Mammary epithelial cell (primary cell): ENCODE measurements at regions of chr1 and their contacts with region 1.

Region 1: GRCh38 chr1:47527658-47528255 is 89.9 kb downstream of the FOXD2 start:
- DNase-seq: peak; percentile 36
- H3K4me3 ChIP-seq: no peak overlapping the region
- H3K27ac ChIP-seq: no peak overlapping the region
- H3K4me1 ChIP-seq: no peaks in the 10 kb centered on the region
- H3K27me3 ChIP-seq: peaks cover 6% of the 10 kb centered on the region
- CTCF ChIP-seq: peak; percentile 76 to 85

Region 2: DNA sequence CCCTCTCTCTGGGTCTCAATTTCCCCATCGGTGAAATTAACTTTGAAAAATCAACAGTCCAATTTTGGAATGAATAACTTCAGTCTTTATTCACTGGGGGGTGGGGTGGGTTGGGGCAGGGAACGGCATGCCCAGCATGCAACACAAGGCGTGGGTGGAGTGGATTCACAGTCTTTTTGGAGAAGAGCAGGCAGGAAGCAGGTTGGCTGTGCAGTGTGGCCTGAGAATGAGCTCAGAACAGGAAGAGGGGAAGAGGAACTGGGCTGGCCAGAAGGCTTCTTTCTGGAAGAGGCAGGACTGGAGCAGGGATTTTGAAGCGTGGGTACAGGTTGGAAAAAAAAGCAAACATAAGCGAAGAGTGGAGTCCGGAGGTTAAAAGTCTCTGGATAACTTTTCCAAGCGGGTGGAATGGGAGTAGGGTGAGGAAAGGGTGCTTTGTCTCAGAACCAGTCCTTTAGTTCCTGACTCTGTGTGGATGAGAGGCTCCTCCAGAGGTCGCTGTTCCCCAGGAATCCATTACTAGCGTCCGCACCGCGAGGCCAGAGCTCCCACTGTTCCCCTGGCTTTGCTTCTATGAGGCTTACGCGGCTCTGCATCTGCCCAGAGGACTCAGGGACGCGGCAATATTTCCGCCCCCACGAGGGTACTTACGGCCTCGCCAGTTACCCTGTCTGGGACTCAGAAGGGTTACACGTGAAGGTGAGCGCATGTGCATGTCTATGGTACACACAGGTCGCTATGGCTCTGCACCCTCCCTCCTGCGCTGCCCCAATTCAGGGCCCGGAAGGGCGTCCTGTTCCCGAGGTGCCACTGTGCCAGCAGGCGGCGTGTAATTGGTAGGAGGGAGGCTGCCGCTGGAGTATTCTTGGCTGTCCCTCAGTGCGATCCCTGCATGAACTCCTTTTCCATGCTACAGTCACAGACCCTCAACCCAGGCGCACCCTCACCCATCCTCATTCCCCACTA is 95.4 kb before region 1 on chr1:
- CTCF ChIA-PET with region 1: no interaction called
- dilution Hi-C with region 1: no loop called
- in situ Hi-C with region 1: loop called in 1 of 2 experiments (anchors 10 kb)
- intact Hi-C with region 1: loop called (anchors 1 kb)
- DNase-seq: peak; percentile 78
- H3K4me3 ChIP-seq: peak overlapping the region in 2 of 3 experiments; percentile 25 to 36
- H3K27ac ChIP-seq: peak overlapping the region; percentile 56
- H3K4me1 ChIP-seq: peaks cover 52% of the 10 kb centered on the region
- H3K27me3 ChIP-seq: no peaks in the 10 kb centered on the region
- CTCF ChIP-seq: peak; percentile 78 to 92

Region 3: DNA sequence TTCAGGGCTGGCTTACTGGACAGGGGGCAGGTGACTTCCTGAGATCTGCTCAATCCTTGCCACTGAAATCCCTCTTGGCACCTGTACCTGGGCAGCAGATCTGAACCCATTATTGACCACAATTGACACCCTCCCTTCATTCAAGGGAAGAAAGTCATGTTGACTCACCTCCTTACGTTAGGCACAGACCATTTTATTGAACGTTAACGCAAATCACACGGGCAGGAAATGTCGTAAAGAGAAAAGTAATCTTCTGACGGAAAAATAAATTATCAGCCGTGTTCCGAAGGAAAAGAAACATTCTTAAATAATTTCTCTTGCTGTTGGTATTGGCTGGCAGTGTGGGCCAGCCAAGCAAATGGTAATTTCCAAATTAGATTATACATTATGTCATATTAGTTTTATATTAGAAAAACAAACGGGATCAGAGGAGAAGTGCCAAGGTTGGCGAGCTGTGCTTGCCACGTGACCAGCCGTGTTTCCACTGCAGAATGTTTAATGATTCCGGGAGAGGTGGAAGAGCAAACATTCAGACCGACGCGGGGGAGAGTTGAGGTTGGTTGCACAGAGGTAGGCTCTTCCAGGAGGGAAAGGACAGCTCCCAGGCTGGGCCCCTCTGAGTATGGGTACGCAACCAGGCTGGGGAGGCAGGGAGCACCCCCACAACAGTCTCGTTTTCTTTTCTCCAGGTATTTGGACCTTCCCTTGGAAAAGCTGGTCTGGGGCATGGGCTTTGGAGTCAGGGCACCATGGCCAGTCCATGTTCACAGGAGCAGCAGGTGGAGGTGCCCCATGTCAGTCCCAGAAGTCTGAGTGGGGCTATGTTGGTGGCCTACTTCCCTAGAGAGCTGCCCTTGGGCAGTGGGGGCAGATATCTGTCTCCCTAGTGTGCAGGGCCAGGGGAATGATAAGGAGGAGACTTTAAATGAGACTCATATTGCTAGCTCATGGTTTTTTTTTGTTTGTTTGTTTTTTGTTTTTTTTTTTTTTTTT is 31.1 kb after region 1 on chr1:
- CTCF ChIA-PET with region 1: no interaction called
- dilution Hi-C with region 1: no loop called
- in situ Hi-C with region 1: no loop called
- intact Hi-C with region 1: no loop called
- DNase-seq: no peak
- H3K4me3 ChIP-seq: no peak overlapping the region
- H3K27ac ChIP-seq: no peak overlapping the region
- H3K4me1 ChIP-seq: peaks cover 36% of the 10 kb centered on the region
- H3K27me3 ChIP-seq: no peaks in the 10 kb centered on the region
- CTCF ChIP-seq: no peak

Region 4: DNA sequence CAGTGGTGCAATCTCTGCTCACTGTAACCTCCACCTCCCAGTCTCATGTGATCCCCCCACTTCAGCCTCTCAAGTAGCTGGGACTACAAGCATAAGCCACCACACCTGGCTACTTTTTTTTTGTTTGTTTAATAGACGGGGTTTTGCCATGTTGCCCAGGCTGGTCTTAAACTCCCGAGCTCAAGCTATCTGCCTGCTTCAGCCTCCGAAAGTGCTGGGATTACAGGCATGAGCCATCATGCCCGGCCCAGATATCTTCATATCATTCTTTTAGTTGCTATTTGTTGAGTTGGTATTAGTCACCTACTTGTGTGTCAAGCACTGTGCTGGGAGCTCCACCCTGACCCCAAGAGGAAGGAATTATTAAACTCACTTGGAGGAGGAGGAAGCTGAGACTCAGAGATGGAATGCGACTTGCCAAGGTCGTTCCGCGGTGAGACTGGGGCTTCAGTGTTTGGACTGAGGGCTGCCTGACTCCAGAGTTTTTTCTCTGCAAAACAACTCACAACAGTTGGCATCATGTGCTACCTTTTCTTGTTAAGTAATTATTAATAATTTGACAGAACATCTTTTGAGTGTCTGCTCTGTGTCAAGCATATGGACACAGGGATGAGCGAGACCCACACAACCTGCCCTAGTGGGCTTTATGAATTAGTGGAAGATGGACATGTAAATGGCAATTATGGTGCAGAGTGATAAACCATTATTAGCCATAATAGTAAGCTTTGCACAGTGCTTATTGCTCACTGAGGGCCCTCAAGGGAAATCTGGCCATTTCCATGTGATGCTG is 42.1 kb after region 1 on chr1:
- CTCF ChIA-PET with region 1: interaction called, 8 read pairs
- dilution Hi-C with region 1: no loop called
- in situ Hi-C with region 1: no loop called
- intact Hi-C with region 1: loop called (anchors 1 kb)
- DNase-seq: peak; percentile 92
- H3K4me3 ChIP-seq: no peak overlapping the region
- H3K27ac ChIP-seq: peak overlapping the region; percentile 71
- H3K4me1 ChIP-seq: peaks cover 20% of the 10 kb centered on the region
- H3K27me3 ChIP-seq: no peaks in the 10 kb centered on the region
- CTCF ChIP-seq: peak; percentile 62 to 77

Region 5: GRCh38 chr1:47638240-47638639 is 110.5 kb after region 1 on chr1:
- CTCF ChIA-PET with region 1: interaction called, 11 read pairs
- dilution Hi-C with region 1: no loop called
- in situ Hi-C with region 1: no loop called
- intact Hi-C with region 1: no loop called
- DNase-seq: no peak
- H3K4me3 ChIP-seq: no peak overlapping the region
- H3K27ac ChIP-seq: no peak overlapping the region
- H3K4me1 ChIP-seq: no peaks in the 10 kb centered on the region
- H3K27me3 ChIP-seq: no peaks in the 10 kb centered on the region
- CTCF ChIP-seq: no peak

Region 6: GRCh38 chr1:47710329-47711071 is 182.7 kb after region 1 on chr1:
- CTCF ChIA-PET with region 1: no interaction called
- dilution Hi-C with region 1: no loop called
- in situ Hi-C with region 1: loop called in 1 of 2 experiments (anchors 5 kb)
- intact Hi-C with region 1: loop called (anchors 1 kb)
- DNase-seq: peak; percentile 41
- H3K4me3 ChIP-seq: no peak overlapping the region
- H3K27ac ChIP-seq: no peak overlapping the region
- H3K4me1 ChIP-seq: peaks cover 23% of the 10 kb centered on the region
- H3K27me3 ChIP-seq: peaks cover 29% of the 10 kb centered on the region
- CTCF ChIP-seq: peak; percentile 87 to 100

Region 7: GRCh38 chr1:47934243-47934805 is 406.6 kb after region 1 on chr1:
- CTCF ChIA-PET with region 1: no interaction called
- dilution Hi-C with region 1: no loop called
- in situ Hi-C with region 1: no loop called
- intact Hi-C with region 1: loop called (anchors 1 kb)
- DNase-seq: no peak
- H3K4me3 ChIP-seq: no peak overlapping the region
- H3K27ac ChIP-seq: no peak overlapping the region
- H3K4me1 ChIP-seq: peaks cover 4% of the 10 kb centered on the region
- H3K27me3 ChIP-seq: no peaks in the 10 kb centered on the region
- CTCF ChIP-seq: no peak